Activated CD4-positive, alpha-beta memory T cell treated with anti-CD3 and anti-CD28 coated beads, Interleukin-2, amount 10 ng/mL, durations not matched to agents 7 days and 5 days (primary cell): ENCODE measurements at regions of chr2 and their contacts with region 1.

Region 1: GRCh38 chr2:99154643-99155536 is at the starts of genes LIPT1 and TSGA10:
- DNase-seq: peak; percentile 93
- H3K4me3 Mint-ChIP-seq: no peak within 1 kb of the TSS
- H3K27ac Mint-ChIP-seq: peak within 1 kb of the TSS; percentile 72
- H3K4me1 Mint-ChIP-seq: peaks cover 29% of the 10 kb centered on the region
- H3K27me3 Mint-ChIP-seq: no peaks in the 10 kb centered on the region
- total RNA-seq, gene LIPT1: 6.7 to 7.3 TPM
- total RNA-seq, gene TSGA10: 3.7 to 5.4 TPM

Region 2: GRCh38 chr2:99141110-99142108 is 13.5 kb before region 1 on chr2 and contains the start of gene C2orf15:
- CTCF ChIA-PET with region 1: interaction called, 8 read pairs
- POLR2A ChIA-PET with region 1: interaction called, 32 read pairs
- DNase-seq: peak; percentile 94
- H3K4me3 Mint-ChIP-seq: peak within 1 kb of the TSS; percentile 97
- H3K27ac Mint-ChIP-seq: peak within 1 kb of the TSS; percentile 85
- H3K4me1 Mint-ChIP-seq: peaks cover 23% of the 10 kb centered on the region
- H3K27me3 Mint-ChIP-seq: peaks cover 9% of the 10 kb centered on the region
- total RNA-seq, gene C2orf15: 0.18 to 0.35 TPM

Region 3: DNA sequence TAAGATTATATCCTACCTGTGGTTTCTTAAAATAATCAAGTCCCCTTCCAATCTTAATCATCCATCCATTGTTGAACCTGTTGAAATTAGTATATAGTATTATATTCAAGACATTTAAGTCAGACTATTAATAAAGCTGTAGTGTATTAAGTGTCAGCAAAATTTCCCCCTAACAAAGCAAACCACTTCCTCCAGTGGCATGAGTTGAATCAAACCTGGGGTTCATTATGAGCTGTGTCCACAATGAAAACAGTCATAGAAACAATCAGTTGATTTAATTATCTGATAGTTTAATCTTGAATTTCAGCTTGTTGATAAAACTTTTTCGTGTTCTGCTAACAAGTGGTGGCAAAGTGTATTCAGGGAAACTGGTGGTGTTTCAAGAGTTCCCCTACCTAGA is 14.6 kb after region 1 on chr2:
- CTCF ChIA-PET with region 1: interaction called, 23 read pairs
- POLR2A ChIA-PET with region 1: interaction called, 4 read pairs
- DNase-seq: no peak
- H3K4me3 Mint-ChIP-seq: no peak overlapping the region
- H3K27ac Mint-ChIP-seq: peak overlapping the region; percentile 9
- H3K4me1 Mint-ChIP-seq: peaks cover 24% of the 10 kb centered on the region
- H3K27me3 Mint-ChIP-seq: no peaks in the 10 kb centered on the region

Region 4: DNA sequence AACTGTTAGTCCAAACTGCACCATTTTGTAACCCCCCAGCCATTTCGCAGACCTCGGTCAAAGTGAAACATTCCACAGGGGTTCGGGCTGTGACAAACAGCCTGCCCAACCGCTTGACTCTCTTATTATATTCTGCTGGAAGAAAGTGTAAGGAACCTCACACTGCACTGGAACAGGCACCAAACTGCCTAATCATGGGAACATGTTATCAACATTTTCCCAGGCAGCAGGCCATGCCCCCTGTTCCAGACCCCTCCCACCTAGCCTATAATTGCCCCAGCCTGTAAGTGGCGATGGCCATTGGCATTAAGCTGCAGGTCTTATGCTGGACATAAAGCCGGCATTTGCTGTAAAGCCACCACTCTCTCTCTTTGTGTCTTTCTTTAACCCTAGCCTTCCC is 83.7 kb after region 1 on chr2:
- CTCF ChIA-PET with region 1: no interaction called
- POLR2A ChIA-PET with region 1: no interaction called
- DNase-seq: no peak
- H3K4me3 Mint-ChIP-seq: no peak overlapping the region
- H3K27ac Mint-ChIP-seq: no peak overlapping the region
- H3K4me1 Mint-ChIP-seq: no peaks in the 10 kb centered on the region
- H3K27me3 Mint-ChIP-seq: no peaks in the 10 kb centered on the region

Region 5: DNA sequence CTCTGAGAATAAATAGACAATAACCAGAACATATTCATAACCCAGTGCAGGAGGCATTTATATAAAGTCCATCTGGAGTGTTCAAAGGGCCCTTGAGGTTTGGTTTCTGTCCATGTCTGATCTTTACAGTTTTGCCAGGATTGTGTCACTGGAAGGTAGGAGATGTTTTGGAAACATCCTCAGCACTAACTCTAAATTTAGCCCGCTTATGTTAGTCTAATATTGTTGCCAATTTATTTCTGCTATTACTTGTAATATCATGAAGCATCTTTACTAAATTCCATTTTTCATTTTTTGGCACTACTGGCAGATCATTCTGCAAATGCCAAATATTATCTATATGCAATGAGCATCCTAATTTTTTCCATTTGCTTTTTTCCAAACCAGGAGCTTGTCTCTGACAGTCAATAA is 357.3 kb after region 1 on chr2:
- CTCF ChIA-PET with region 1: no interaction called
- POLR2A ChIA-PET with region 1: no interaction called
- DNase-seq: no peak
- H3K4me3 Mint-ChIP-seq: no peak overlapping the region
- H3K27ac Mint-ChIP-seq: no peak overlapping the region
- H3K4me1 Mint-ChIP-seq: no peaks in the 10 kb centered on the region
- H3K27me3 Mint-ChIP-seq: peaks cover 4% of the 10 kb centered on the region